ENCODE measurements at regions of chr6 and their contacts with region 1.

Region 1: DNA sequence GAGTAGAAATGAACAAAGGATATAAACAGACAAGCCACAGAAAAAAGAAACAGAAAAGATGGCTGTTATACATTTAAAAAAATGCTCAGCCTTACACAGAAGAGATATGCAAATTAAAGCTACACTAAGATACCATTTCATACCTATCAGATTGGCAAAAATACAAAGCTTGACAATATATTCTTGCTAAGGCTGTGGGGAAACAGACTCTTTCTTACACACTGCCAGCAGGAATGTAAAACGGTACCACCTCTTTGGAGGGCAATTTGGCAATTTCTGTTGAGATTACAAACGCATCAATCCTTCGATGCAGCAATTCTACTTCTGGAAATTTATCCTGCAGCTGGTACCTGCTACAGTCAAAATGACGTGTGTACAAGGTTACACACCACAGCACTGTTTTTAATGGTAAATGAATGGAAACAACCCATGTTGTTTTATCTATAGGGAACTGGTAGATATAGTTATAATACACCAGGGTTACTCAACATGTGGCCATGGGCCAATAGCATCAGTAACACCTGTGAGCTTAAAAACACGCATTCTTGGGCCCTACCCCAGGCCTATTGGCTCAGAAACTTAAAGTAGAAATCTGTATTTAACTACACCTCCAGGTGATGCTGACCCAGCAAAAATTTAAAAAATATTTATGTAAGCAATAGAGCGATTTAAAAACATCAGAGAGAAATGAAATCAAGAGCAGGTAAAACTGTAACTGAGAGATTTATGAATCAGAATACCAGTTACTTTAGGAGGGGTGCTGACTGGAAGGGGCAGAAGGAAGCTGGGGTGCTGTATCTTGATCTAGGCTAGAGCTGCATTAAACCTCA is 53.3 kb downstream of the TRAM2 start:
- DNase-seq: no peak
- H3K4me3 Mint-ChIP-seq: no peak overlapping the region
- H3K27ac Mint-ChIP-seq: no peak overlapping the region
- H3K4me1 Mint-ChIP-seq: no peaks in the 10 kb centered on the region
- H3K27me3 Mint-ChIP-seq: no peaks in the 10 kb centered on the region

Region 2: DNA sequence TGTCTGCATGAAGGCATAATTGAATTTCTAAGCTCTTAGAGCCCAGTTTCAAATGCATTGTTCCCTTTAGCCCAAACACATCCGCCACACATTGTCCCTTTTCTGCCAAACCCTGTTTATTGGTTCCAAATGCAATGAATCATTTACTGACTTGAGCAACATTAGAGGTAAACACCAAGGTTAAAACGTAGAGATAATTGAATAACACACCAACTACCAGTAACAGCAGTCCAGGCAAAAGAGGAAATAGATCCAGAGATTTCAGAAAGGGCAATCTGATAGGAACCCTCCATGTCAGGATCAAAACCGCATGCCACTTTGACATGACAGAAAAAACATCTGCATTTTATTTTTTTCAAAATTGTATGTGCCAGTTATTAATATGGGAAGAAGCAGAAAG is 550.9 kb before region 1 on chr6:
- CTCF ChIA-PET with region 1: no interaction called
- POLR2A ChIA-PET with region 1: no interaction called
- DNase-seq: no peak
- H3K4me3 Mint-ChIP-seq: no peak overlapping the region
- H3K27ac Mint-ChIP-seq: no peak overlapping the region
- H3K4me1 Mint-ChIP-seq: no peaks in the 10 kb centered on the region
- H3K27me3 Mint-ChIP-seq: no peaks in the 10 kb centered on the region

Region 3: GRCh38 chr6:52537001-52537753 is 13.6 kb after region 1 on chr6:
- CTCF ChIA-PET with region 1: interaction called, 11 read pairs
- POLR2A ChIA-PET with region 1: no interaction called
- DNase-seq: no peak
- H3K4me3 Mint-ChIP-seq: no peak overlapping the region
- H3K27ac Mint-ChIP-seq: peak overlapping the region; percentile 10
- H3K4me1 Mint-ChIP-seq: peaks cover 49% of the 10 kb centered on the region
- H3K27me3 Mint-ChIP-seq: no peaks in the 10 kb centered on the region